HEK293 (cell line): ENCODE measurements at regions of chr1 and their contacts with region 1.

Region 1: GRCh38 chr1:91173346-91173890 is 151.6 kb upstream of the ZNF644 start:
- H3K4me3 ChIP-seq: no peak overlapping the region
- H3K27ac ChIP-seq: no peak overlapping the region
- H3K4me1 ChIP-seq: no peaks in the 10 kb centered on the region; the same call in 1 of the 2 replicates
- CTCF ChIP-seq: no peak

Region 2: DNA sequence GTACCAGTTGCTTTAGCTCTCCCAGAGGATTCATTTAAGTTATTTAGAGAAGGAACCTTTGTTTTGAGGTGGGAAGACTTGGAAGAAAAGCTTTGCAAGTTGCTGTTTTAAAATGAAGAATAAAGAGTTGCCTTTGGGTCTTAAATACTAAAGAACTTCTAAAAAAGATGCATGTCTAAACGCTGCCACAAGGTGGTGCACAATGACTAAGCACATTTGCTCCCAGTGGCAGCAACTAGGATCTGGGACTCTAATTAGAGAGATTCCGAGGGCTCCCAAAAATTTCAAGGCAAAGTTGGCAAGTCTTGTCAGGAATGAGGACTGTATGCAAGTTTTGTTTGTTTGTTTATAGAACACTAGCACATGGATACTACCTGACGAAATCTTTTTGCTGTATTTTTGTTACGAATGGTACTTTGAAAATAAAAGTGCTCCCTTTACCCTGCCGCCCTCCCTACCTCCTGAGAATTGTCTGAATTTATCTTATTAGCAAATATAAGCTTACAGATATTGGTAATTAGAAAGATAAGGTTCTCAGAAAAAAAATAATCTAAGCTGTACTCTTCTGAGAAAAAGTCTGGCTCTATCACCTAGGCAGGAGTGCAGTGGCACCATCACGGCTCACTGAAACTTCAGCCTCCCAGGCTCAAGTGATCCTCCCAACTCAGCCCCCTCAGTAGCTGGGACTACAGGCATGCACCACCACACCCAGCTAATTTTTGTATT is 109.4 kb after region 1 on chr1:
- CTCF ChIA-PET with region 1: interaction called, 187 read pairs
- POLR2A ChIA-PET with region 1: no interaction called
- H3K4me3 ChIP-seq: no peak overlapping the region
- H3K27ac ChIP-seq: no peak overlapping the region
- H3K4me1 ChIP-seq: no peaks in the 10 kb centered on the region; the same call in 1 of the 2 replicates
- CTCF ChIP-seq: peak; percentile 64